ENCODE measurements at regions of chr11 and their contacts with region 1.

Region 1: DNA sequence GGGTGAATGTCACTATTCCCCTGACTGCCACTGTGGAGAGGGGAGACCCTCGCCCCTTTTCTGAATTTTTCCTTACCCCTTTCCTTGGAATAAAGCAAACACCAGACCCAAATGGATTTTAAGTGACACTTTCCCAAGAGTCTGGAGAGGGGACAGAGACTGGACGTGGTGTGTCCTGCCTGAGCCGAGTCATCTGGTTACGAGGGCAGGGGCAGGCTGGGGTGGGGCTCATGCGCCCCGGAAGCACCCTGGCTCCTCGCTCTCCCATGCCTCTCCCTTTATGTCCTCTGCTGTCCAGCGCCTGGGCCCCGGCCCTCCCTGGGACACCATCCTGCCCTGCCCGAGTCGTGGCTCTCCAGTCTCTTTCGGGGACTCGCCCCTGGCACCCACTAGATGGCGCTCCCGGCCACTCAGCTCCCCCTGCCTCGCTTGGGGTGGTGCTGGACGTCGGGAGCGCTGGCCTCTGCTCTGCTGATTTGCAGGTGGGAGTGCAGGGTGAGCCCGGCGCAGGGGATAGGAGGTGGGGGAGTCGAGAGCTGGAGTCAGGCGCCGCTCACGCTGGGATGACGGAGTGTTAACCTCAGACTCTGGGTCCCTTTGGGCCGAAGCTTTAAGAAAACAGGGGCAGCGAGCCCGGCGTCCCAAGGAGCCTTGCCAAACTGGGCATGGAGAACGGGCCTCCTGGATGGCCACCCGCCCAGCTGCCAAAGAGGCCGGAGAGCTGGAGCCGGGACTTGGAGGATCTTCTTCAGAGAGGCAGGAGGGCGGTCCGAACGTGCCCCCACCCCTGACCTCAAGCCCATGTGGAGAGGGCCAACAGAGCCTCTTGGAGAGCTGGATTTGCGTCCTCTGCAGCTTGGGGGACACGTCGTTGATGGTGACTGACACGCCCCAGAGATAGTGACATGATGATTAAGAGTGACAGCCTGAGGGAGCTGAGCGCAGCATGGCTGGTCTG is 89.9 kb downstream of the RPS6KA4 start:
- DNase-seq: no peak
- H3K4me3 ChIP-seq: peak overlapping the region; percentile 36
- CTCF ChIP-seq: peak; percentile 97

Region 2: GRCh38 chr11:64276653-64277431 is 172.0 kb before region 1 on chr11:
- CTCF ChIA-PET with region 1: no interaction called
- POLR2A ChIA-PET with region 1: no interaction called
- DNase-seq: no peak
- H3K4me3 ChIP-seq: no peak overlapping the region
- CTCF ChIP-seq: no peak

Region 3: DNA sequence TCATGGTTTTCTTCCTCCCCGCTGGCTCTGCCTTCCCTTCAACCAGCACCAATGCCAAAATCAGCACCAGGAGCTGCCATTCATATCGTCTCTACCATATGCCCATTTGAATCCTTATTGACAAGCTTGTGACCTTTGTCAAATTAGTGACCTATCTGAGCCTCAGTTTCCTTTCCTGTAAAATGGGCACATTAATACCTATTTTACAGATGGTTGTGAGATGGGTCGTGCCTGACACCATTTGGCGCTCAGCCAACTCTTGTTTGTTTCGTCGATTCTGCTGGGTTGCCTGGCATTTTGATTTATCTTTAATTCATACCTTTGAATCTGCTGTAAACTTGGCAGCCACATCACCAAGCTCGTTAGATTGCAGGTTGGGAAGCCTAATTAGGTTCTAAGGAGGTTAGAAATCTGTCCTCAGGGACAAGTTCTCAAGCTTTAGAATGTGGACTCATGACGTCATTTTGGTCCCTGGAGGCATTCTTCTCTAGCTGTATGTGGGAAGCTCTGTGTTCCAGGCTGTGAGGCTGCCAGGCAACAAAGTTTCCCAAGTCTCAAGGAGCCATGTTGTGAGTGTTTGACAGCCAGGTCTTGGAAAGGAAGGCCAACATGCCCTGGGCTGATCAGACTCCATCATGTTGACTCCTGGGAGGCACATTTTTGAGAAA is 28.9 kb before region 1 on chr11:
- CTCF ChIA-PET with region 1: interaction called, 17 read pairs
- POLR2A ChIA-PET with region 1: no interaction called
- DNase-seq: no peak
- H3K4me3 ChIP-seq: no peak overlapping the region
- CTCF ChIP-seq: no peak

Region 4: GRCh38 chr11:64436000-64436399 is 12.9 kb before region 1 on chr11:
- CTCF ChIA-PET with region 1: interaction called, 38 read pairs
- POLR2A ChIA-PET with region 1: no interaction called
- DNase-seq: no peak
- H3K4me3 ChIP-seq: no peak overlapping the region
- CTCF ChIP-seq: no peak

Region 5: GRCh38 chr11:64466115-64466718 is 17.3 kb after region 1 on chr11:
- CTCF ChIA-PET with region 1: interaction called, 33 read pairs
- POLR2A ChIA-PET with region 1: no interaction called
- DNase-seq: no peak
- H3K4me3 ChIP-seq: no peak overlapping the region
- CTCF ChIP-seq: no peak

Region 6: DNA sequence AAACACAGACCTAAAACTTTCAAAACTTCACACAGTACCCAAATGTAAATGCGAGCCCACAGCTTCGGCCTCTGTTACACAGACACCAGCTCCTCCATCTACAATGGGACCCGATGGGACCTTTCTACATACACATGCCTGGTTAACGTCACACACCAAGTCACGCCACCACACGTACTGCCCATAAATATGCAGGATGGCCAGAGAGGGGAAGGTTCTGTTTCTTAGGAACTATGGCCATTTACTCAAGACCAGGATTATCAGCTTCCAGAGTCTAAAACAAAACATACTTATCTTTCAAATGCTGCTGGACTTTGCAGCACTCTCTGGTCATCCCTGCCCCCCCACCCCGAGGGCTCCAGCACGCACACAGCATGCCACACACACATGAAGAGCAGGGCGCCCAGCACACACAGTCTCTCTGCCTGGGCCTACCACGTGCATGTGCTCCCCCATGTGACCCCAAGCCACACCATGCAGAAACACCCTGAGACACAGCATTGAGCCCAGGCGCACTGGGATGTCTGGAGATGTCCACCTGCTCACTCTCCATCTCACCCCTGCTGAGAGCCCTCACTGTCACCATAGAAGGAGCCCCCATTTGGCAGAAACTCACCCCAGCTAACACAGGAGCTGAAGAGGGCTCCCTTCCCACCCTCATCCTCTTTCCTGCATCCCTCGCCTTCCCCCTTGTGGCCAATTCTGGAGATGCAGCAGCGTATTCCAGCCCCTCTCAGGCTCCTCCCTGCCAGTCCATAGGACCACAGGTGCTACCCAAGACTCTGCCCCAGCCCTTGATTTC is 203.9 kb after region 1 on chr11:
- CTCF ChIA-PET with region 1: interaction called, 111 read pairs
- POLR2A ChIA-PET with region 1: no interaction called
- DNase-seq: no peak
- H3K4me3 ChIP-seq: no peak overlapping the region
- CTCF ChIP-seq: peak; percentile 95

Region 7: DNA sequence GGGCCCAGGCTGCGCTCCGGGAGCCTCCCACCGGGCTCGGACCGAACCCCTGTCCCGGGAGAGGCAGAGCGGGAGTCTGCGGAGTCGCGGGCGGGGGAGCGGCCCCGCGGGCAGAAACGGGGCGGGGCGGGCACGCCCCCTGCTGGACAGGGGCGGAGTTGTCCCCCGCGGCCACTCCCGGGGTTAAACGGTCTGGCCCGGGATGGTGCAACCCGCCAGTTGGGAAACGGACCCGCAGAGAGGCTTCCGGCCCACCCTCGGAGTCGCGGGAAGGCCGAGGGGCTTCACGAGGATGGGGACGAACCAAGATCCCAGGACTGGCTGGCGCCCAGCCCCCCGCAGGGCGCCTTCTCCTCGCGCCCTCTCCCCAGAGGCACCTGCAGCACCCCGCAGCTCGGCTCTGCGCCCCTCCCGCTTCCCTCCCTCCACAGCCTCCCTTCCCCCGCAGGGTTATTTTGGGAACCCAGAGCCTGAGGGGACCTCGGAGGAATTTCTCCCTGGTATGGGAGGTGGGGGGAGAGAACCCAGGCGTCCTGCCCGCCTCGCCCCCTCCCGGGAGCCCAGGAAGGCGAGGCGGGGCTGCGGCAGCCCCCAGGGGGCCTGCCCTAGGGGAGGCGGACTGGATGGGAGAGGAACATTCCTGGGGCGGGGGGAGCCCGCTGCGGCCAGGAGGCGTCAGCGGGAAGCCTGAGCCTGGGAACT is 294.2 kb after region 1 on chr11:
- CTCF ChIA-PET with region 1: interaction called, 10 read pairs
- POLR2A ChIA-PET with region 1: no interaction called
- DNase-seq: no peak
- H3K4me3 ChIP-seq: peak overlapping the region; percentile 50
- CTCF ChIP-seq: peak; percentile 81

Measured in AG04449 (cell line).